ENCODE measurements at regions of chr9 and their contacts with region 1.

Region 1: DNA sequence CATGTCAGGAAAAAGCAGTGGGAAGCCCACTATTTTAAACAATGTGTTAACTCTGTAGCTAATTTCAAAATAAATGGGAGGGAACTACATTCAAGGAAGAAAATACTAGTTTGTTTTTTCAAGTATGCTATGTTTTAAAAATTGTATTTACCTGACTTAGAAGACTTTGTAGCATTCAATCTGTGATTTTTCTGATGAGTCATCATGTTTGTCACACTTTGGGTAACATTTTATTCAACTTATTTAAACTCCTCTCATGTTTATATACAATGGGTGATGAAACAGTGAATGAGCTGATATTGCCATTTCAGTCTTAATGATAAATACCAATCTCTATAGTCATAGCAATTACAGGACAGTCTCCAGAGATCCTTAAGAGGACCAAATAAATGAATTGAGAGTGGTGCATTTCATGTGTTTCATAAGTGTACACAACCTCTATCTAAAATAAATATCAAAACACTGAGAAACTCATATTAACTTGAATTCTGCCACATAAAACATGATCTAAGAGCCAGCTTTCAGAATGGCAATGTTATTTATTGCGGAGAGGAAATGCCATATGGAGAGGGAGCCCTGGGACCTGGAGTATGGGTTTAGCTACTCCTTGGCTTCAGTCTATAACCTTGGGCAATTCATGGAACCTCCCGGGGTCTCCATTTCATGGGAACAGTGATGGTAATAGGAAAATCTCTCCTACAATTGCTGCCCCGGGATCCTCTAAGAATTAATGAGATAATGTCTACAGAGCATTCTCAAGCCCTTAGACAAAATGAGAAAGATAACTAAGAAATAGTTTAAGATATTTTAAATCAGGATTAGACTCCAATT is 913.9 kb downstream of the TLE4 start:
- DNase-seq: no peak
- ATAC-seq: no peak
- H3K4me3 ChIP-seq: no peak overlapping the region
- H3K27ac ChIP-seq: no peak overlapping the region
- H3K4me1 ChIP-seq: no peaks in the 10 kb centered on the region
- H3K27me3 ChIP-seq: no peaks in the 10 kb centered on the region
- CTCF ChIP-seq: no peak
- EP300 ChIP-seq: no peak
- POLR2A ChIP-seq: no peak
- RAD21 ChIP-seq: no peak

Region 2: GRCh38 chr9:80516678-80517077 is 31.0 kb after region 1 on chr9:
- CTCF ChIA-PET with region 1: no interaction called
- POLR2A ChIA-PET with region 1: no interaction called
- RAD21 ChIA-PET with region 1: no interaction called
- SMC1A ChIA-PET with region 1: no interaction called
- in situ Hi-C with region 1: no loop called
- intact Hi-C with region 1: loop called (anchors 5 kb)
- DNase-seq: no peak
- ATAC-seq: no peak
- H3K4me3 ChIP-seq: no peak overlapping the region
- H3K27ac ChIP-seq: no peak overlapping the region
- H3K4me1 ChIP-seq: no peaks in the 10 kb centered on the region
- H3K27me3 ChIP-seq: no peaks in the 10 kb centered on the region
- CTCF ChIP-seq: no peak
- EP300 ChIP-seq: no peak
- POLR2A ChIP-seq: no peak
- RAD21 ChIP-seq: no peak